ENCODE measurements at regions of chr6 and their contacts with region 1.

Region 1: DNA sequence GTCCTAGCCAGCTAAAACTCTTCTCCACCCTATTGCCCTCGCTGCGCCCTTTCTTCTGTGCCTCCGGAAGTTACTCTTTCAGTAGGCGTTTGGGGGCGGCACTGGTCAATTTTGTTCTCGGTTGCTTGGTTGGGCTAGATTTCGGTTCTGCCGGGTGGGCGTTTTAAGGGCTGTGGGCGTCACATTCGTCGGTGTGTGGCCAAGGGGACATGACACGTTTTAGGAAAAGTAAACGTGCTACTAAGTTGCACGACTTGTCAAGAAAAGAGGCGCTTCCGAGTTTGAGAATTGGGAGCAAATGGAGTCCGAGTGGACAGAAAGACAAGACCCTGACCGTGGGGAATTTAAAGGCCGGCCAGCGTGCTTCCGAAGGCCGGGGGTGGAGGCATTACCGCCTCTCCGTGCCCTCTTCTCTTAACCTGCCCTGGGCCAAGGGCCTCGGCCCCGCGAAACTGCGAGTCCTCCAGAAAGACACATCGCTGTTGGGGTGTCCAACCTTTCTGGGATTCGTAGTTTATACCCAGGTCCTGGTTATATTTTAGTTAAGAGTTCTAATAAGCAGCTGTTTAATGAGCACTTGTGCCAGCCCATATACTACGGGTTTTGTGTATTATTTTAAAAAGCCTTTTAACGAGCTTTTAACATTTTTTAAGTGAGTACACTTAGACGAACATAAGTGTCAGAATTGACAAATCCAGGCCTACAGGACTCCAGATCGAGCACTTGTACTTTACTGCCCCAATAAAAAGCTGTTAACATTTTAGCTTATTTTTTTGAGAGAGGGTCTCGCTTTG is 661 bp upstream of the BAG6 start:
- DNase-seq: peak in 2 of 9 donors; percentile 81 to 89
- ATAC-seq: peak; percentile 77
- H3K4me3 ChIP-seq: peak overlapping the region; percentile 66
- H3K4me3 Mint-ChIP-seq: peak overlapping the region; percentile 96 to 100 (median 99)
- H3K27ac ChIP-seq: peak overlapping the region; percentile 95
- H3K27ac Mint-ChIP-seq: peak overlapping the region; percentile 99 to 100 (median 100)
- H3K4me1 ChIP-seq: peaks cover 23 to 30% of the 10 kb centered on the region in 2 donors
- H3K4me1 Mint-ChIP-seq: peaks cover 39 to 71% (median 63%) of the 10 kb centered on the region in 7 donors
- H3K27me3 ChIP-seq: no peaks in the 10 kb centered on the region
- H3K27me3 Mint-ChIP-seq: no peaks in the 10 kb centered on the region

Region 2: DNA sequence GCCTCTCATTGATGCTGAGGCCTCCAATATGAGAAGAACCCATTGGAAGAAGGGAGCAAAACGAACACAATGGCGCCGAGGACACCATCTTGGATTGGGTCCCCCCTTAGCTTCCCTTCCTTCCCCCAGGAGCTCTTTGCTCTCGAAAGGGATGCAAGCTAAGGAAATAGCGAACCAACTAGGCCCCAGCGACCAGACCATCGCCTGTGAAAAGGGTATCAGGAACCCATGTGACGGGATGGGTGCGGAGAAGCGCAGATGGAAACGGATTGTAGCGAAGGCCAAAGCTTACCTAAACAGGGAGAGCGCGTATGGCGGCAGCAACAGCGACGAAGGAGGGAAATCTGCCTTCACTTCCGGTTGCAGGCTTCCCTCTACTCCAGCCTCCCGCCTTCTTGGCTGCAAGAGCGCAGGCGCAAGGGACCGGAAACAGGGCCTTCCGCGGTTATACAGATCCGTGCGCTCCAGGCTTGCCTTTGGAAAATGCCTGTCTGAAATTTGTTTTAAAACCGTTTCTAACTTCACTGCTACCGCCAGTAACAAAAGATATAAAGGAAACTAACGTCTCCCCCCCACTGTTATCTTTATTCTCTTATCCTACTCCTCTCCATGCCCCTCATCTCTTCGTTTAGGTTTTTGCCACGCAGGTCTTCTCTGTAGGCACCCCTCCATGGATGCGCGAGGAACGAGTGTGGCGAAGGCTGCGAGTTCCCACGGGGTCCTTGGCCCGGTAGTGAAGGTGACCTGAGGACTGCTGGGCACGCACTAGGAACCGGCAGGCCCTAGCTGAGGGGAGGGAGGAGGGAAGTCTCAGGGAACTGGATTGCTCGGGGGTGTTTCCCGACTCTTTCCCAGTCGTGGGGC is 111.2 kb before region 1 on chr6 and contains the start of gene DDX39B:
- CTCF ChIA-PET with region 1: no interaction called
- POLR2A ChIA-PET with region 1: interaction called, 21 read pairs
- intact Hi-C with region 1: loop called (anchors 1 kb)
- DNase-seq: peak; percentile 80 to 97 (median 94)
- ATAC-seq: peak; percentile 83
- H3K4me3 ChIP-seq: peak within 1 kb of the TSS; percentile 77
- H3K4me3 Mint-ChIP-seq: peak within 1 kb of the TSS; percentile 84 to 99 (median 98)
- H3K27ac ChIP-seq: peak within 1 kb of the TSS; percentile 97
- H3K27ac Mint-ChIP-seq: peak within 1 kb of the TSS; percentile 90 to 100 (median 100)
- H3K4me1 ChIP-seq: peaks cover 34 to 45% of the 10 kb centered on the region in 2 donors
- H3K4me1 Mint-ChIP-seq: peaks cover 34 to 65% (median 55%) of the 10 kb centered on the region in 7 donors
- H3K27me3 ChIP-seq: no peaks in the 10 kb centered on the region
- H3K27me3 Mint-ChIP-seq: no peaks in the 10 kb centered on the region
- total RNA-seq, gene DDX39B: 443 to 761 (median 546) TPM

Region 3: GRCh38 chr6:31597006-31597405 is 56.1 kb before region 1 on chr6:
- CTCF ChIA-PET with region 1: interaction called, 11 read pairs
- POLR2A ChIA-PET with region 1: interaction called, 4 read pairs
- intact Hi-C with region 1: no loop called
- DNase-seq: peak in 7 of 9 donors; percentile 68 to 83 (median 79)
- ATAC-seq: peak; percentile 89
- H3K4me3 ChIP-seq: no peak overlapping the region
- H3K4me3 Mint-ChIP-seq: peak overlapping the region in 9 of 10 donors; percentile 38 to 68 (median 55)
- H3K27ac ChIP-seq: peak overlapping the region; percentile 47
- H3K27ac Mint-ChIP-seq: peak overlapping the region; percentile 52 to 95 (median 81)
- H3K4me1 ChIP-seq: peaks cover 34 to 44% of the 10 kb centered on the region in 2 donors
- H3K4me1 Mint-ChIP-seq: peaks cover 34 to 60% (median 55%) of the 10 kb centered on the region in 7 donors
- H3K27me3 ChIP-seq: no peaks in the 10 kb centered on the region
- H3K27me3 Mint-ChIP-seq: no peaks in the 10 kb centered on the region

Region 4: DNA sequence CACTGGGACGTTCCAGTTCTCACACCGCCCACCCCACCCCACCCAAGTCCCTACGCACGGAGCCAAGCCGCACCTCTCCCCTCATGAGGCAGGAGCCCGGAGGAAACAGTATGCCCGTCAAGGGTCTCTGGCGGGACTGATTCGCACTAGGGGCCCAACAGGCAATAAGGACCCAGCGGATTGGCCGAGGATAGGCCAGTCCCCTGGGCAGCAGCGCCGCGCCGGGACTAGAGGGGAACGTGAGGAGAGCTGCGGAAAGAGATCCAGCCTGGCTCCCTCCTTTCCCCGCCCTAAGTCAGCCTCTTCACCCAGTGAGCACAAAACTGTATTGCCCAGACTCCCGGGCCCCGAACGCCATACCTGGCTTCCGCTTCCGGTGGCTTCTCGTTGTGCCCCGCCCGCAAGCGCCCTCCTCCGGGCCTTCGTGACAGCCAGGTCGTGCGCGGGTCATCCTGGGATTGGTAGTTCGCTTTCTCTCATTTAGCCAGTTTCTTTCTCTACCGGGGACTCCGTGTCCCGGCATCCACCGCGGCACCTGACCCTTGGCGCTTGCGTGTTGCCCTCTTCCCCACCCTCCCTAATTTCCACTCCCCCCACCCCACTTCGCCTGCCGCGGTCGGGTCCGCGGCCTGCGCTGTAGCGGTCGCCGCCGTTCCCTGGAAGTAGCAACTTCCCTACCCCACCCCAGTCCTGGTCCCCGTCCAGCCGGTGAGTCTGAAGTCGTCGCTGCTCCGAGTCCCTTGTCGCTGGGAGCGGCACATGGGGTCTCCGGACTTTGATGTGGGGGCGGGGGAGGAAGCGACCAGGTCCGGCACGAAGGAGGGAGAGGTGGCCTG is 12.6 kb after region 1 on chr6 and contains the start of gene CSNK2B:
- CTCF ChIA-PET with region 1: interaction called, 19 read pairs
- POLR2A ChIA-PET with region 1: interaction called, 193 read pairs
- intact Hi-C with region 1: loop called (anchors 1 kb)
- DNase-seq: peak; percentile 87 to 99 (median 98)
- ATAC-seq: peak; percentile 94
- H3K4me3 ChIP-seq: peak within 1 kb of the TSS; percentile 91
- H3K4me3 Mint-ChIP-seq: peak within 1 kb of the TSS; percentile 93 to 99 (median 96)
- H3K27ac ChIP-seq: peak within 1 kb of the TSS; percentile 97
- H3K27ac Mint-ChIP-seq: peak within 1 kb of the TSS; percentile 94 to 99 (median 98)
- H3K4me1 ChIP-seq: peaks cover 33 to 43% of the 10 kb centered on the region in 2 donors
- H3K4me1 Mint-ChIP-seq: peaks cover 25 to 75% (median 64%) of the 10 kb centered on the region in 7 donors
- H3K27me3 ChIP-seq: no peaks in the 10 kb centered on the region
- H3K27me3 Mint-ChIP-seq: peaks cover 0 to 2% (median 0%) of the 10 kb centered on the region in 5 donors
- total RNA-seq, gene CSNK2B: 101 to 215 (median 133) TPM

Region 5: DNA sequence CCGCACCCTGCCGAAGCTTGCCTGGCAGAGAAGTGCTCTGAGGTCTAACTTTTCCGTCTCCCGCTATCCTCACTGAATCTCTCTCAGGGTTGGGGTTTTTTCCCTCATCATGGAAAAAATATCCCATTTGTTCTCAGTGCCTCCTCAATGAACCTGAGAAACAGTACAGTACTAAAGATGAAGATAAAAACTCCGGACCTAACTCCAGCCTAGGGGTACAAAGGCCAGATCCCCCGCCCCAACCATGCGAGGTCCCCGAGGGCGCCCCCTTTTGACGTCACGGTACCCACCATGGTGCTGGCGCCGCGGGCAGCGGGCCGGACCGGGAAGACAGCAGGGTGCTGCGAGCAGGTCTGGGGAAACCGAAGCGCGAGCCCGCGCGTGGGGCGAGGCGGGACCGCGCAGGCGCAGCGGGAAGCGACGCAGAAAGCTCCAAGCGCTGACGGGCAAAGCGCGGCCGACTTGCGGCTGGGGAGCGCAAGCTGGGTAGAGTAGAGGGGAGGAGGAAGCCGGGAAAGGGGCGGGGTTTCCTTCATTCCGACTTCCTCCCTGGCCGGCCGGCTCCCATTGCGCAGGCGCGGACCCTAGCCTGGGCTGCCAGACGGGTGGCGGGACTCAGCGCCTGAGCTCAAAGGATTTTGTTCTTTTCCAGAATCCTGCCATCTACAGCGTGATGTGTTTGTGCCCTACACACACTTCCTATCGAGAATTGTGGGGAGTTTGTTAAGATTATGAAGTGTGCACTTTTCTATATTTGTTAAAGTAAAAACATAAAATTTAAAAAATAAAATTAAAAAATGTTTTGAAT is 153.5 kb after region 1 on chr6 and contains the start of gene LSM2:
- CTCF ChIA-PET with region 1: no interaction called
- POLR2A ChIA-PET with region 1: interaction called, 14 read pairs
- intact Hi-C with region 1: no loop called
- DNase-seq: peak; percentile 96 to 98 (median 98)
- ATAC-seq: peak; percentile 100
- H3K4me3 ChIP-seq: peak within 1 kb of the TSS; percentile 92
- H3K4me3 Mint-ChIP-seq: peak within 1 kb of the TSS; percentile 86 to 95 (median 92)
- H3K27ac ChIP-seq: peak within 1 kb of the TSS; percentile 89
- H3K27ac Mint-ChIP-seq: peak within 1 kb of the TSS; percentile 88 to 97 (median 93)
- H3K4me1 ChIP-seq: peaks cover 9 to 14% of the 10 kb centered on the region in 2 donors
- H3K4me1 Mint-ChIP-seq: peaks cover 16 to 47% (median 30%) of the 10 kb centered on the region in 7 donors
- H3K27me3 ChIP-seq: no peaks in the 10 kb centered on the region
- H3K27me3 Mint-ChIP-seq: no peaks in the 10 kb centered on the region
- total RNA-seq, gene LSM2: 22.9 to 94.5 (median 29.2) TPM

Region 6: DNA sequence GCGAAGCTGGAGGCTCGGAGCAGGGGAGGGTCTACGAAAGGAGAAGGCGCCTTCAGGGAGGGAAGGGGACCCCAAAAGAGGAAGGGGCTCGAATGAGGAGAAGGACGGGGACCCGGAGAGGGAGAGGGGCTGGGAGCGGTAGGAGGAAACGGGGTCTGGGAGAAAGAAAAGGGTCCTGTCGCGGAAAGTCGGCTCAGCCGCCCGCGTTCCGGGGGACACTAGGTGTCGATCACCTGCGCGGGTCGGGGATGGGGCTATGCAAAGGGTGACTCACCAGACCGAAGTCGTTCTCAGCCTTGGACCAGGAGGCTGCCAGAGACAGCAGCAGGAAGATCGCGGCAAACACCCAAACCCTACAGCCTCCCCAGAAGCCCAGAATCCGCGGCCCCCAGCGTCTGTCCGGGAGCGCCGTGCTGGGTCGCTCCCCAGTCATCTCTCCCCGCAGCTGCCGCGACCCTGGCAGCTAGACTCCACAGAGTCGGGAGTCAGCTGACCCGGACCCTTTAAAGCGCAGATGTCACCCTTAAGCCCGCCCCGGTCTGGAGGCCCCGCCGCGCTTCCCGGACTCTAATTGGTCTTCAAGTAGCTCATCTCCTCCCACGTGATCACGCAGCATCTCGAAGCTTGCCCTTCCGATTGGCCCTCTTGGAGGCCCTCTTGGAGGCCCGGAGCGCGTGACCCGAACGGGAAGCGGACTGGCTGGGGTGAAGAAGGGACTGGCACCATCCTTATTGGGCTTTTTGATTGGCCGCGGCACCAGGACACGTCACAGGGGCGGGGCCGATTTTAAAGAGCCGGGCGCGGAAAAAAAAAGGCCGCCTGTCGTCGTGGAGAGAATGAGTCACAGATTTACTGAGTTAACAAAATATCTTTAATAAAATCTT is 209.5 kb after region 1 on chr6 and contains the start of gene NEU1:
- CTCF ChIA-PET with region 1: no interaction called
- POLR2A ChIA-PET with region 1: interaction called, 9 read pairs
- intact Hi-C with region 1: loop called (anchors 1 kb)
- DNase-seq: peak; percentile 87 to 100 (median 99)
- ATAC-seq: peak; percentile 97
- H3K4me3 ChIP-seq: peak within 1 kb of the TSS; percentile 97
- H3K4me3 Mint-ChIP-seq: peak within 1 kb of the TSS; percentile 87 to 96 (median 93)
- H3K27ac ChIP-seq: peak within 1 kb of the TSS; percentile 86
- H3K27ac Mint-ChIP-seq: peak within 1 kb of the TSS; percentile 85 to 97 (median 93)
- H3K4me1 ChIP-seq: peaks cover 8 to 15% of the 10 kb centered on the region in 2 donors
- H3K4me1 Mint-ChIP-seq: peaks cover 14 to 29% (median 20%) of the 10 kb centered on the region in 7 donors
- H3K27me3 ChIP-seq: no peaks in the 10 kb centered on the region
- H3K27me3 Mint-ChIP-seq: peaks cover 0 to 2% (median 0%) of the 10 kb centered on the region in 5 donors
- total RNA-seq, gene NEU1: 18.6 to 35.0 (median 20.1) TPM

Region 7: GRCh38 chr6:32195652-32195901 is 542.5 kb after region 1 on chr6:
- CTCF ChIA-PET with region 1: no interaction called
- POLR2A ChIA-PET with region 1: interaction called, 4 read pairs
- intact Hi-C with region 1: loop called in 1 of 2 experiments (anchors 1 kb)
- DNase-seq: peak; percentile 94 to 100 (median 98)
- ATAC-seq: peak; percentile 89
- H3K4me3 ChIP-seq: peak overlapping the region; percentile 98
- H3K4me3 Mint-ChIP-seq: peak overlapping the region; percentile 92 to 99 (median 97)
- H3K27ac ChIP-seq: peak overlapping the region; percentile 97
- H3K27ac Mint-ChIP-seq: peak overlapping the region; percentile 86 to 99 (median 97)
- H3K4me1 ChIP-seq: peaks cover 20 to 29% of the 10 kb centered on the region in 2 donors
- H3K4me1 Mint-ChIP-seq: peaks cover 24 to 40% (median 31%) of the 10 kb centered on the region in 7 donors
- H3K27me3 ChIP-seq: no peaks in the 10 kb centered on the region
- H3K27me3 Mint-ChIP-seq: no peaks in the 10 kb centered on the region

Measured in naive thymus-derived CD4-positive, alpha-beta T cell (primary cell).